Astrocyte of the cerebellum (primary cell): ENCODE measurements at regions of chr2 and their contacts with region 1.

Region 1: DNA sequence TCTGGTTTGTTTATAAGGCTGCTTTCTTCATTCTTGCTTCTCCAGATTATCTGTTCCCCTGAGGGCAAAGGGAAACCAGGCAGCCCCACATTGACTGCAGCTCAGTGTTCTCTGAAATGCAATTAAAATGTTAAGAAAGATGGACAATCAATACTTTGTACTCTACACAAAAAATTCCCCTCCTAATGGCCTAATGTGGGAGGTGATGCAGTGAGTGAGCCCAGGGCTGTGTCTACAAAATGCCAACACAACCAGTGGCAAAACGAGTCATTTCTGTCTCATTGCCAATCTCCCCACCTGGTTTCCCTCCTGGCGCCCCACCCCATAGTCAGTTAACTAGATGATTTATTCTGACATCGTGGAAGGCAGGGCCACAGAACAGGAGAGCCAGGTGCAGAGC is 541.7 kb upstream of the RAB6C start:
- DNase-seq: no peak
- H3K4me3 ChIP-seq: no peak overlapping the region
- CTCF ChIP-seq: no peak

Region 2: GRCh38 chr2:129347486-129348217 is 90.1 kb before region 1 on chr2:
- in situ Hi-C with region 1: loop called (anchors 5 kb)
- DNase-seq: no peak
- H3K4me3 ChIP-seq: no peak overlapping the region
- CTCF ChIP-seq: no peak

Region 3: GRCh38 chr2:129369437-129369836 is 68.3 kb before region 1 on chr2:
- in situ Hi-C with region 1: no loop called
- DNase-seq: no peak
- H3K4me3 ChIP-seq: no peak overlapping the region
- CTCF ChIP-seq: no peak